ENCODE measurements at regions of chr2 and their contacts with region 1.

Region 1: GRCh38 chr2:166057370-166058164 is 70.3 kb downstream of the SCN1A start:
- DNase-seq: no peak
- H3K4me3 Mint-ChIP-seq: no peak overlapping the region
- H3K27ac Mint-ChIP-seq: no peak overlapping the region
- H3K4me1 Mint-ChIP-seq: no peaks in the 10 kb centered on the region
- H3K27me3 Mint-ChIP-seq: no peaks in the 10 kb centered on the region
- CTCF ChIP-seq: peak; percentile 40

Region 2: GRCh38 chr2:166170356-166170755 is 112.8 kb after region 1 on chr2:
- CTCF ChIA-PET with region 1: no interaction called
- intact Hi-C with region 1: no loop called
- DNase-seq: no peak
- H3K4me3 Mint-ChIP-seq: no peak overlapping the region
- H3K27ac Mint-ChIP-seq: no peak overlapping the region
- H3K4me1 Mint-ChIP-seq: peaks cover 9% of the 10 kb centered on the region
- H3K27me3 Mint-ChIP-seq: no peaks in the 10 kb centered on the region
- CTCF ChIP-seq: no peak

Region 3: GRCh38 chr2:166424841-166425240 is 367.3 kb after region 1 on chr2:
- CTCF ChIA-PET with region 1: no interaction called
- intact Hi-C with region 1: loop called (anchors 1 kb)
- DNase-seq: no peak
- H3K4me3 Mint-ChIP-seq: no peak overlapping the region
- H3K27ac Mint-ChIP-seq: no peak overlapping the region
- H3K4me1 Mint-ChIP-seq: no peaks in the 10 kb centered on the region
- H3K27me3 Mint-ChIP-seq: no peaks in the 10 kb centered on the region
- CTCF ChIP-seq: no peak